Activated CD8-positive, alpha-beta T cell treated with anti-CD3 and anti-CD28 coated beads for 36 hours (primary cell): ENCODE measurements at regions of chr17 and their contacts with region 1.

Region 1: GRCh38 chr17:59106463-59107305 is at the start of gene TRIM37:
- DNase-seq: peak; percentile 99
- ATAC-seq: peak; percentile 97
- H3K4me3 Mint-ChIP-seq: peak within 1 kb of the TSS; percentile 99
- H3K27ac Mint-ChIP-seq: peak within 1 kb of the TSS; percentile 91
- H3K4me1 Mint-ChIP-seq: peaks cover 47% of the 10 kb centered on the region
- H3K27me3 Mint-ChIP-seq: no peaks in the 10 kb centered on the region
- CTCF ChIP-seq: no peak
- total RNA-seq, gene TRIM37: 23.9 to 24.8 TPM

Region 2: DNA sequence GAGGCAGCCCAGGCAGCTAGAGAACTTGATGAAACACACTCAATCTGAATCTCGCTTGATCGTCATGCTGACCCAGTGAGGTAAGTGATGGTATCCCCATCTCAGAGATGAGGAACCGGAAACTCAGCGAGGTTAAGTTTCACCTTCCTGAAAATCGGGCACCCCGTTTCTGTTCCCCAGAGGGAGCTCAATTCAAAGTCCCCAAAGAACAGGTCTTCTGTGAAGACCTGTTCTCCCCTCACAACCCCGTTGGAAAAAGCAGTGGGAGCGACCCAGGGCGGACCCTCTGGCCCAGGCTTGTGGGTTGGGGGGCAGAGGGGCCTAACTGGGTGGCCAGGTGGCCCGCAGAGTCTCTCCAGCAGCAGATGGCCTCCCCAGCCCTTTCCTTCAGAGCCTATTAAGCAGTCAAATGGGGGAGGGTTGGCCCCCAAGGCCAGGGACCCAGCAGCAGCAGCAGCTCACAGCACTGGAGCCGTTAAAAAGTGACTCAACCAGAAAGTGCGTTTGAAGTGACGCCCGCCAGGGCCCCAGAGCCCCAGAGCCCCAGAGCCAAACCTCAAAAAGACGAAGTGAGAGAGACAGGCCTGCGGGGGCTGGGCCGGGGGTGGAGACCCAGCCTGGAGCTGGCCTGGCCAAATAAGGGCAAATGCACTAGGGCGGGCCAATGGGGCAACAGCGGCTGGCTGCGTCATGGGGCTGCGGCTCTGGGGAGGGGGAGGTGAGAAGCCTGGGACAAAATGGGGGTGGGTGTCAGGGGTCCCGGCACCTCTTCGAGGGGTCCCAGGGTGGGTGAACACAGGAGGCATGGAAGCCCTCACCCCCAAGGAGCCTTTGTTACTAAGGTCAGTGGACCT is 768.9 kb before region 1 on chr17:
- CTCF ChIA-PET with region 1: no interaction called
- POLR2A ChIA-PET with region 1: no interaction called
- intact Hi-C with region 1: loop called (anchors 10 kb)
- DNase-seq: peak; percentile 98
- ATAC-seq: peak; percentile 60
- H3K4me3 Mint-ChIP-seq: peak overlapping the region; percentile 81
- H3K27ac Mint-ChIP-seq: peak overlapping the region; percentile 96
- H3K4me1 Mint-ChIP-seq: peaks cover 3% of the 10 kb centered on the region
- H3K27me3 Mint-ChIP-seq: no peaks in the 10 kb centered on the region
- CTCF ChIP-seq: no peak

Region 3: GRCh38 chr17:59121850-59122480 is 15.3 kb after region 1 on chr17:
- CTCF ChIA-PET with region 1: no interaction called
- POLR2A ChIA-PET with region 1: interaction called, 15 read pairs
- intact Hi-C with region 1: no loop called
- DNase-seq: no peak
- ATAC-seq: no peak
- H3K4me3 Mint-ChIP-seq: no peak overlapping the region
- H3K27ac Mint-ChIP-seq: no peak overlapping the region
- H3K4me1 Mint-ChIP-seq: no peaks in the 10 kb centered on the region
- H3K27me3 Mint-ChIP-seq: no peaks in the 10 kb centered on the region
- CTCF ChIP-seq: no peak

Region 4: DNA sequence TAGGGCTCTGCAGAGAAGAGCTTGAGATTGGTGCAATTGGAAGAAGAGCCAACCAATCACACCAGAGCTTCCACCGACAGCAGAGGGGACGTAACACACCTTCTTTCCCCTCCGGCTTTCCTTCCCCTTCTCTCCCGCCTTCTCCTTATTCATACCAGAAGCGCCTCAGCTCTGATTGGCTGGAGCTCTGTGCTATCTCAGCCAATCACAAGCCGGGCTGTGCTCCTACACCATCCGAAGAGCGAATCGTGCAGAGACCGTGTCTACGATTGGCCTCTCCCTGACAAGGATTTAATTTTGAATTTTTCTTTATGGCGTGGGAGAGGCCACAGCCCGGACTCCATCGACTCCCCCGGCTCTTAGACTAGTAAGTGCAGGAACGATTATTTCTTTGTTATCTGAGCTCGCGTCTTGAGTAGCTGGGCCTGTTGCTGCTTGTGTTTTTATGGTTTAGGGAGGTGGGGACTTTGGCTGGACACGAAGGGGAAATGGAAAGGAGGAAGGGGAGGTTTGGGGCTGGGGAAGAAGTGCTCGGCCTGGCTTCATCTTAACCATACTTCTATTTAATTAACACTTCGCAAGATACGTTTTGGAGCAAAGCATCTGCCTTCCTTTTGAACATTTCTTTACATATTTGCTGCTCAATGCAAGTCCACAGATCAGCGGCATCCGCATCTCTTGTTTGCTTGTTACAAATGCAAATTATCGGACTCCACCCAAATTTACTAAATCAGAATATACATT is 48.9 kb after region 1 on chr17 and contains the start of gene PRR11:
- CTCF ChIA-PET with region 1: interaction called, 4 read pairs
- POLR2A ChIA-PET with region 1: interaction called, 17 read pairs
- intact Hi-C with region 1: loop called (anchors 5 kb)
- DNase-seq: peak; percentile 97
- ATAC-seq: peak; percentile 90
- H3K4me3 Mint-ChIP-seq: no peak within 1 kb of the TSS
- H3K27ac Mint-ChIP-seq: no peak within 1 kb of the TSS
- H3K4me1 Mint-ChIP-seq: peaks cover 30% of the 10 kb centered on the region
- H3K27me3 Mint-ChIP-seq: no peaks in the 10 kb centered on the region
- CTCF ChIP-seq: no peak
- total RNA-seq, gene PRR11: 66.6 to 67.5 TPM